MCF 10A (cell line): ENCODE measurements at regions of chr11 and their contacts with region 1.

Region 1: DNA sequence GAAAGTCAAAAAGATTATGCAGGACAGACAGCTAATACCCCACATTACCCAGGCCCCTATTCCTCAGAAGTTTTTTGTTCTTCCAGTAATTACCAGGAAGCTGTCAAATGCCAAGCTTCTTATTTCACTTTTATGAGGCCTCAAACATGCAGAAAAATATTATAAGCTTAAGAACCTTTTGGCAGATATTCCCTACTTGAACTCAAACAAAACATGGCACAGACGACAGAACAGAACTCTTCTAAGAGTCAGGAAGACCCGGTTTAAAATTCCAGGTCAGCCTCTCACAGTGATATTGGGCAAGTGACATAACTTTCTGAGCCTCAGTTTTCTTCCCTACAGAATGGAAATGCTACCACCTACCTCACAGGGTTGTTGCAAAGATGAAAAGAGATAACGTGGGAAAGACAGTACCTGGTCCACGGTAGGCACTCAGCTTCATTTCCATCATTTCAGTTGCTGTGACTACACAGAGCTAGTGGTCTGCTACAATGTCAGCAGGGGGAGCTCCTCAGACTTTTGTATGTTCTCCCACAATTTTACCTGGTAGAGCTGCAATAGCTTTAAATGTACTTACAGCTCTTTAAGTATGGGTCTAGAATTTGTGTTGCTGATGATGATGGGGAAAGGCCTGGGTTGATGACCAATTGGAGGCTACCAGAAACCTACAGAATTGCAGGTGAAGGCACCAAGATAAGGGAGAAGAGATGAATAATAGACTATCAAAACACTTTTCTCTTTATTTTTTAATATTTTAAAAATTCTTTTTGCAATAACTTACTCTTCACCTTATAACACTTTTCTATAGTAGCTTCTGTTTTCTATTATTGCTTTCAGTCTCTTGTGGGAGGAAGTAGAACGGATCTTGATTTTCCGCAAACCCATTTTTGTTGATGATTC is 98.3 kb upstream of the CHRM4 start:
- DNase-seq: peak; percentile 60
- H3K4me3 Mint-ChIP-seq: no peak overlapping the region
- H3K27ac Mint-ChIP-seq: no peak overlapping the region
- H3K4me1 Mint-ChIP-seq: peaks cover 9% of the 10 kb centered on the region
- H3K27me3 Mint-ChIP-seq: no peaks in the 10 kb centered on the region
- CTCF ChIP-seq: peak; percentile 44

Region 2: GRCh38 chr11:46537537-46538295 is 47.8 kb after region 1 on chr11:
- CTCF ChIA-PET with region 1: interaction called, 14 read pairs
- POLR2A ChIA-PET with region 1: interaction called, 4 read pairs
- intact Hi-C with region 1: loop called (anchors 2 kb)
- DNase-seq: peak; percentile 92
- H3K4me3 Mint-ChIP-seq: no peak overlapping the region
- H3K27ac Mint-ChIP-seq: no peak overlapping the region
- H3K4me1 Mint-ChIP-seq: peaks cover 12% of the 10 kb centered on the region
- H3K27me3 Mint-ChIP-seq: no peaks in the 10 kb centered on the region
- CTCF ChIP-seq: peak; percentile 84

Region 3: GRCh38 chr11:46547579-46547978 is 57.7 kb after region 1 on chr11:
- CTCF ChIA-PET with region 1: interaction called, 10 read pairs
- POLR2A ChIA-PET with region 1: no interaction called
- intact Hi-C with region 1: no loop called
- DNase-seq: no peak
- H3K4me3 Mint-ChIP-seq: no peak overlapping the region
- H3K27ac Mint-ChIP-seq: no peak overlapping the region
- H3K4me1 Mint-ChIP-seq: no peaks in the 10 kb centered on the region
- H3K27me3 Mint-ChIP-seq: no peaks in the 10 kb centered on the region
- CTCF ChIP-seq: no peak